ENCODE measurements at regions of chr6 and their contacts with region 1.

Region 1: DNA sequence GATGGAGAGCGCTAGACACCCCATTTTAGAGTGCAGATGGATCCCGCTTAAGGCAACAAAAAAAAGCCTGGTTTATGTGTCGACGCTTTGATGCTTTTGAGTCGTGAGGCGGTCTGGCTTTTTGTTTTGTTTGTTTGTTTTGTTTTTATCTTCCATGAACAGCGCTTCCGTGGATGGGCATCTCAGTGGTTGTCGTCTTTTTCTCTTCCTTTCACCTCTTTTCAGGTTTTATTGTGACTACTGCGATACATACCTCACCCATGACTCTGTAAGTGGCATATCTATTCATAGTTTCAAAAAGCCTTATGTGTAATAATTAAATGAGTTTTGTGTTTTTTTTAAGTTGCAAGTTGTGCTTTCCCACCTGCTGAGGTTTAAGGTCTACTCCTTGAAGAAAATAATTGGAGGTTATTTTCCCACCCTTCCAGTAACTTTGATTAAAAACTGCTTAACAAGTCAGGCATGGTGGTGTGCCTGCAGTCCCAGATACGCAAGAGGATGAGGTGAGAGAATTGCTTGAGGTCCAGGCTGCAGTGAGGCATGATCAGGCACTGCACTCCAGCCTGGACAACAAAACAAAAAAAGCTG is 476 bp downstream of the SNRPC start:
- DNase-seq: no peak
- H3K4me3 ChIP-seq: peak overlapping the region; percentile 60 to 86 (median 84)
- H3K27ac ChIP-seq: peak overlapping the region; percentile 78
- H3K4me1 ChIP-seq: peaks cover 6% of the 10 kb centered on the region
- H3K27me3 ChIP-seq: no peaks in the 10 kb centered on the region
- CTCF ChIP-seq: no peak
- POLR2A ChIP-seq: no peak

Region 2: GRCh38 chr6:34459899-34460593 is 297.7 kb before region 1 on chr6:
- CTCF ChIA-PET with region 1: interaction called, 10 read pairs
- POLR2A ChIA-PET with region 1: no interaction called
- dilution Hi-C with region 1: no loop called
- intact Hi-C with region 1: no loop called
- DNase-seq: peak; percentile 60
- H3K4me3 ChIP-seq: no peak overlapping the region
- H3K27ac ChIP-seq: no peak overlapping the region
- H3K4me1 ChIP-seq: no peaks in the 10 kb centered on the region
- H3K27me3 ChIP-seq: peaks cover 0 to 10% of the 10 kb centered on the region in 2 experiments
- CTCF ChIP-seq: peak; percentile 61 to 70
- POLR2A ChIP-seq: no peak

Region 3: DNA sequence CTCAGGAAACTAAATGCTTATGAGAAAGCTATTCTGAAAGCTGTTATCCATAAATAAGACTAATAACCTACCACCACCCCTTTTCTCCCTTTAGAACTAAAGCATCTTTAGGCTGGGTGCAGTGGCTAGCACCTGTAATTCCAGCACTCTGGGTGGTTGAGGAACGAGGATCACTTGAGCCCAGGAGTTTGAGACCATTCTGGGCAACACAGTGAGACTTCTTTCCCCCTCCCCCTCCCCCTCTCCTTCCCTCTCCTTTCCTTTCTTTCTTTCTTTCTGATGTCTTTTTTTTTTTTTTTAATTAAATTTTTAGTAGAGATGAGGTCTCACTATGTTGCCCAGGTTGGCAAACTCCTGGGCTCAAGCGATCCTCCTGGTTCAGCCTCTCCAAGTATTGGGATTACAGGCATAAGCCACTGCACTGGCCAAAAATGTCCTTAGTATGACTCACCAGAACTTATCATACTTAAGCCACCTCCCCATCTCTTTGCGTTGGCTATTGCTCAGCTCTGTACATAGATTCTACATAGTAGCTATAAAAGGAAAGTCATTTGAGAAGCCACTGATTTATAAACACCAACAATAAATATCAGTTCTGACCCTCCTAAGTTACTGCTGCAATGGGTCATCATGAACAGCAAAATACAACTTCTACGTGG is 146.8 kb before region 1 on chr6:
- CTCF ChIA-PET with region 1: interaction called, 4 read pairs
- POLR2A ChIA-PET with region 1: no interaction called
- dilution Hi-C with region 1: no loop called
- intact Hi-C with region 1: loop called (anchors 10 kb)
- DNase-seq: peak; percentile 51
- H3K4me3 ChIP-seq: no peak overlapping the region
- H3K27ac ChIP-seq: peak overlapping the region; percentile 65
- H3K4me1 ChIP-seq: peaks cover 10% of the 10 kb centered on the region
- H3K27me3 ChIP-seq: no peaks in the 10 kb centered on the region
- CTCF ChIP-seq: no peak
- POLR2A ChIP-seq: no peak

Region 4: GRCh38 chr6:34791701-34792235 is 34.0 kb after region 1 on chr6 and contains the start of gene BLTP3A:
- CTCF ChIA-PET with region 1: interaction called, 6 read pairs
- POLR2A ChIA-PET with region 1: no interaction called
- dilution Hi-C with region 1: no loop called
- intact Hi-C with region 1: loop called (anchors 1 kb)
- DNase-seq: peak; percentile 69
- H3K4me3 ChIP-seq: peak within 1 kb of the TSS; percentile 77 to 97 (median 82)
- H3K27ac ChIP-seq: peak within 1 kb of the TSS; percentile 48
- H3K4me1 ChIP-seq: peaks cover 21% of the 10 kb centered on the region
- H3K27me3 ChIP-seq: no peaks in the 10 kb centered on the region
- CTCF ChIP-seq: peak in 1 of 2 donors; percentile 6
- POLR2A ChIP-seq: peak; percentile 78
- total RNA-seq, gene BLTP3A: 9.3 and 10.5 TPM in 2 replicates

Region 5: GRCh38 chr6:34867484-34867883 is 109.7 kb after region 1 on chr6:
- CTCF ChIA-PET with region 1: no interaction called
- POLR2A ChIA-PET with region 1: no interaction called
- dilution Hi-C with region 1: no loop called
- intact Hi-C with region 1: loop called (anchors 1 kb)
- DNase-seq: no peak
- H3K4me3 ChIP-seq: no peak overlapping the region
- H3K27ac ChIP-seq: no peak overlapping the region
- H3K4me1 ChIP-seq: peaks cover 22% of the 10 kb centered on the region
- H3K27me3 ChIP-seq: no peaks in the 10 kb centered on the region
- CTCF ChIP-seq: no peak
- POLR2A ChIP-seq: no peak

Measured in endothelial cell of umbilical vein (primary cell).